HEK293 (cell line): ENCODE measurements at regions of chr6 and their contacts with region 1.

Region 1: GRCh38 chr6:106360410-106360988 is at the start of gene CRYBG1:
- H3K4me3 ChIP-seq: peak within 1 kb of the TSS; percentile 68
- H3K27ac ChIP-seq: peak within 1 kb of the TSS; percentile 25; the same call in 1 of the 2 replicates
- H3K4me1 ChIP-seq: 0 out of 2 replicates have a peak, but pooled peaks cover 2% of the 10 kb centered on the region
- CTCF ChIP-seq: peak; percentile 88

Region 2: DNA sequence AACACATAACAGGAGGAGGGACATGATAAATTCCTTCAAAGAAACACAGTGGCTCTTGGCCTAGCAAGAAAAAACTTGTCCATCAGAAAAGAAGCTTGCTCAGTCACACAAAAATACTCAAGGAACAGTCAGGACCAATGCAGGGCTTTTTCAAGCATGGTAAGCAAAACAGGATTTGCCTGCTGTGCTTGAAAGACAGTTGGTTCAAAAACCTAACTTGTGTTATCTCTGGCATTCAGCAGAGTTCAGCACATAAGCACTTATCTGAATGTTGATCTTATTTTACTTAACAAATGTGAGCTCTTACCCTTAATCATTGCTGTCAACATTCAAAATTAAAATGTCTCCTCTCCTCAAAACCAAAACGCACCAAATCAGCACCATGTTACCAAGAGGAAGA is 73.3 kb before region 1 on chr6:
- CTCF ChIA-PET with region 1: no interaction called
- POLR2A ChIA-PET with region 1: no interaction called
- H3K4me3 ChIP-seq: no peak overlapping the region
- H3K27ac ChIP-seq: no peak overlapping the region
- H3K4me1 ChIP-seq: peaks cover 3% of the 10 kb centered on the region; the same call in 1 of the 2 replicates
- CTCF ChIP-seq: no peak

Region 3: DNA sequence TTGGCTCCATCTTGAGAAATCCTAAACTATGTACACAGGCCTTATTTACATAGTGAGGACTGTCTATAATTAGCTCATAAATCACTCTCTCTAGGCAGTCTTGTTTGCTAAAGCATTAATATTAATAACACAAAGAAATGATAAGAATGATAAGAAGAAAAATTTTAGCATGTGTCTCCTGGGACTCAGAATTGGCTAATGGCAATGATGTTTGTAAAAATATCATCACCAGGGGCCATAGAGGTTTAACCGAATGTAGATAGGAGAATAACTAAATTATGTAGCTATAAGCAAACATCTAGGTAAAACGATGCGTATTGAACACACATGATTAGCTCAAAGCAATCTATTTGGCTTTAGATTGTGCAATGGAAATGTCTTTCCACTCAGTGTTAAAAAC is 13.2 kb before region 1 on chr6:
- CTCF ChIA-PET with region 1: interaction called, 48 read pairs
- POLR2A ChIA-PET with region 1: no interaction called
- H3K4me3 ChIP-seq: no peak overlapping the region
- H3K27ac ChIP-seq: no peak overlapping the region
- H3K4me1 ChIP-seq: no peaks in the 10 kb centered on the region
- CTCF ChIP-seq: no peak

Region 4: GRCh38 chr6:106372838-106373501 is 12.5 kb after region 1 on chr6:
- CTCF ChIA-PET with region 1: interaction called, 62 read pairs
- POLR2A ChIA-PET with region 1: interaction called, 3 read pairs
- H3K4me3 ChIP-seq: no peak overlapping the region
- H3K27ac ChIP-seq: no peak overlapping the region
- H3K4me1 ChIP-seq: no peaks in the 10 kb centered on the region
- CTCF ChIP-seq: no peak

Region 5: GRCh38 chr6:106439446-106439845 is 78.9 kb after region 1 on chr6:
- CTCF ChIA-PET with region 1: interaction called, 10 read pairs
- POLR2A ChIA-PET with region 1: no interaction called
- H3K4me3 ChIP-seq: no peak overlapping the region
- H3K27ac ChIP-seq: no peak overlapping the region
- H3K4me1 ChIP-seq: peaks cover 6% of the 10 kb centered on the region; the same call in 1 of the 2 replicates
- CTCF ChIP-seq: no peak

Region 6: GRCh38 chr6:106591111-106591825 is 230.8 kb after region 1 on chr6:
- CTCF ChIA-PET with region 1: no interaction called
- POLR2A ChIA-PET with region 1: no interaction called
- H3K4me3 ChIP-seq: no peak overlapping the region
- H3K27ac ChIP-seq: no peak overlapping the region
- H3K4me1 ChIP-seq: no peaks in the 10 kb centered on the region
- CTCF ChIP-seq: no peak